Activated T-helper 2 cell treated with anti-CD3 and anti-CD28 coated beads, Interferon-gamma antibody, Interleukin-2, Interleukin-4, amounts not matched to agents 10 μg/mL and 5 μg/mL and 100 μg/mL, durations not matched to agents 14 hours and 24 hours and 36 hours (primary cell): ENCODE measurements at regions of chr15 and their contacts with region 1.

Region 1: DNA sequence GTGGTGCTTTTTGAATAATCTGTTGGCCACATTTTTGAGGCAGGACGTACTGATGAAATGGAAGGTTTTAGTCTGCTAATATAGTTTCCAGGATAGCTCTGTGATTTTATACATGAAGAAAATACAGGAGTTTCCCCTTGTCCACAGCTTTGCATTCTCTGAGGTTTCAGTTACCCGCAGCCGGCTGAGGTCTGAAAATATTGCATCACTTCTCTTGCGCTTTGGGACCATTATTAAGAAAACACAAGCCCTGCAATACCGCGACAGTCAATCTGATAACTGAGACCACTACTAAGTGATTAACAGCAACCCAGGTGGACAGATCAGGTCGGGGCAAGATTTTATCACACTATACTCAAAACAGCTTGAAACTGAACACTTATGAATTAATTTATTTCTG is 33.0 kb downstream of the BLM start:
- DNase-seq: no peak
- H3K4me3 Mint-ChIP-seq: peak overlapping the region; percentile 58
- H3K27ac Mint-ChIP-seq: peak overlapping the region; percentile 89
- H3K4me1 Mint-ChIP-seq: peaks cover 46% of the 10 kb centered on the region
- H3K27me3 Mint-ChIP-seq: no peaks in the 10 kb centered on the region

Region 2: DNA sequence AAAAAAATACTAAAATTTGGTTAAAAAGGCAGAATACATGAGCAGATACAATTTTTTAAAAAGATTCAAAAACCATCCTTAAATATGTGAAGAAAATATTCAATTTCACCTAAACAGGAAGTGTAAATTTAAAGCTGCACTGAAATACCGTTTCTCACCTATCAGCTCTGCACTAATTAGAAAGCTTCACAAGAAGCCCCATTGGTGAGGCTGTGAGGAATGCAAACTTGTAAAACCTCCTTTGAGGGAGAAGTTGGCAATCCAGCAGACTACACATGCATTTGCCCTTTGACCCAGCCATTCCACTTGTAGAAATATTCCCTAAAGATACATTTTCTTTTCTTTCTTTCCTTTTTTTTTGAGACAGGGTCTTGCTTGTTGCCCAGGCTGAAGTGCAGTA is 14.3 kb before region 1 on chr15:
- intact Hi-C with region 1: no loop called
- DNase-seq: no peak
- H3K4me3 Mint-ChIP-seq: no peak overlapping the region
- H3K27ac Mint-ChIP-seq: no peak overlapping the region
- H3K4me1 Mint-ChIP-seq: peaks cover 46% of the 10 kb centered on the region
- H3K27me3 Mint-ChIP-seq: no peaks in the 10 kb centered on the region

Region 3: GRCh38 chr15:90780916-90781315 is 30.7 kb after region 1 on chr15:
- intact Hi-C with region 1: loop called (anchors 5 kb)
- DNase-seq: no peak
- H3K4me3 Mint-ChIP-seq: peak overlapping the region; percentile 58
- H3K27ac Mint-ChIP-seq: peak overlapping the region; percentile 87
- H3K4me1 Mint-ChIP-seq: peaks cover 24% of the 10 kb centered on the region
- H3K27me3 Mint-ChIP-seq: no peaks in the 10 kb centered on the region

Region 4: DNA sequence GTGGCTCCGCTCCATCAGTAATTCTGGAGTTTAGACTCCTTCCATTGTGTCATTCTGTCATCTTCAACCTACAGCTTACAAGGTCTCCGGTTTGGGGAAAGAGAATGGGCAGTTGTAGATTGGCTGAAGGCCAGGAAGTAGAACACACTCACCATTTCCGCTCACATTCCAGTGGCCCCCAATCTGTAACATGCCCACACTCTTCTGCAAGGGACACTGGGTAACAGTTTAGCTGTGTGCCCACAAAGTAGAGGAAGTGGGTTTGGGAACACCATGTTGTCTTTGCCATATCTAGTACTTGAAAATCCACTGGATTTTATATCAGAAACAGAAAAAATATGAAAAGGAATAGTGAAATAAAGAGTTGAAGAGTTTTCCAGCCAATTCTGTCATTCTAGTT is 503.4 kb after region 1 on chr15:
- intact Hi-C with region 1: no loop called
- DNase-seq: no peak
- H3K4me3 Mint-ChIP-seq: no peak overlapping the region
- H3K27ac Mint-ChIP-seq: no peak overlapping the region
- H3K4me1 Mint-ChIP-seq: peaks cover 1% of the 10 kb centered on the region
- H3K27me3 Mint-ChIP-seq: peaks cover 16% of the 10 kb centered on the region